ENCODE measurements at regions of chr15 and their contacts with region 1.

Region 1: DNA sequence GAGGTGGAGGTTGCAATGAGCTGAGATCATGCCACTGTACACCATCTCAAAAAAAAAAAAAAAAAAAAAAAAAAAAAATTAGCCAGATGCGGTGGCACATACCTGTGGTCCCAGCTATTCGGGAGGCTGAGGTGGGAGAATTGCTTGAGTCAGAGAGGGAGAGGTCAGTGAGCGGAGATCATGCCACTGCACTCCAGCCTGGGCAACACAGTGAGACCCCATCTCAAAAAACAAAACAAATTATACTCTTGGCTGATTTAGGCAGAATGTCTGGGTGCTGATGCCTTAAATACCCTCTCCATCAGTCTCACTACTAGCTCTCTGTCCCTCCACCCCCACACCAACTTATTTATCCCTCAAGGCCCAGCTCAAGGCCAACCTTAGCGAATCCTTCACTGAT is 14.0 kb downstream of the UBR1 start:
- DNase-seq: no peak
- ATAC-seq: no peak
- H3K4me3 ChIP-seq: no peak overlapping the region
- H3K4me3 Mint-ChIP-seq: no peak overlapping the region
- H3K27ac ChIP-seq: no peak overlapping the region
- H3K27ac Mint-ChIP-seq: no peak overlapping the region
- H3K4me1 ChIP-seq: peaks cover 0 to 5% of the 10 kb centered on the region in 2 experiments
- H3K4me1 Mint-ChIP-seq: peaks cover 47 to 54% (median 52%) of the 10 kb centered on the region in 3 donors
- H3K27me3 ChIP-seq: no peaks in the 10 kb centered on the region
- H3K27me3 Mint-ChIP-seq: no peaks in the 10 kb centered on the region

Region 2: DNA sequence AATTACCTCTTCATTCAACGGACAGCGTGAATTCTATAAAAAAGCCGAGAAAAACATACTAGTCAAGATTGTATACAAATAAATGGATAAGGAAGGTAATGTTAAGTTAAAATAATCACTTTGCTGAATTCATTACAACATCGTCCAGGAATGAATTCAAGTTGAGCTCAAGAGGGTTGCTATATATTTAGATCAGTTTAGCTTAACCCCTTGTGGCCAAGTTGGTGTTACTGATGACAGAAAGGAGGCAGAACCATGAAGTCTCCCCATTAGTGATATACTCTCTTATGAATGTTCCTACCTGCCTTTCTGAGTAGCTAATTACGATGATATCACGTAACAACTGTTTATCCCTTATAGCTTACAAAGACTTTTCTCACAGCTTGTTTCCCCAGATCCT is 21.0 kb before region 1 on chr15:
- CTCF ChIA-PET with region 1: interaction called in 1 of 2 experiments, 3 read pairs
- POLR2A ChIA-PET with region 1: interaction called in 1 of 2 experiments, 10 read pairs
- DNase-seq: no peak
- ATAC-seq: no peak
- H3K4me3 ChIP-seq: no peak overlapping the region
- H3K4me3 Mint-ChIP-seq: no peak overlapping the region
- H3K27ac ChIP-seq: no peak overlapping the region
- H3K27ac Mint-ChIP-seq: no peak overlapping the region
- H3K4me1 ChIP-seq: no peaks in the 10 kb centered on the region
- H3K4me1 Mint-ChIP-seq: no peaks in the 10 kb centered on the region
- H3K27me3 ChIP-seq: no peaks in the 10 kb centered on the region
- H3K27me3 Mint-ChIP-seq: no peaks in the 10 kb centered on the region

Measured in T-cell (primary cell).